ENCODE measurements at regions of chr14 and their contacts with region 1.

Region 1: GRCh38 chr14:81400852-81401251 is 728 bp upstream of the STON2 start:
- DNase-seq: peak; percentile 57
- H3K4me3 Mint-ChIP-seq: peak overlapping the region; percentile 0
- H3K27ac Mint-ChIP-seq: peak overlapping the region; percentile 48
- H3K4me1 Mint-ChIP-seq: peaks cover 29% of the 10 kb centered on the region
- H3K27me3 Mint-ChIP-seq: no peaks in the 10 kb centered on the region
- CTCF ChIP-seq: no peak

Region 2: GRCh38 chr14:81105378-81105777 is 295.5 kb before region 1 on chr14:
- CTCF ChIA-PET with region 1: no interaction called
- intact Hi-C with region 1: no loop called
- DNase-seq: no peak
- H3K4me3 Mint-ChIP-seq: no peak overlapping the region
- H3K27ac Mint-ChIP-seq: no peak overlapping the region
- H3K4me1 Mint-ChIP-seq: no peaks in the 10 kb centered on the region
- H3K27me3 Mint-ChIP-seq: peaks cover 13% of the 10 kb centered on the region
- CTCF ChIP-seq: no peak

Region 3: GRCh38 chr14:81324018-81324417 is 76.8 kb before region 1 on chr14:
- CTCF ChIA-PET with region 1: no interaction called
- intact Hi-C with region 1: loop called (anchors 2 kb)
- DNase-seq: peak; percentile 73
- H3K4me3 Mint-ChIP-seq: peak overlapping the region; percentile 73
- H3K27ac Mint-ChIP-seq: peak overlapping the region; percentile 66
- H3K4me1 Mint-ChIP-seq: peaks cover 48% of the 10 kb centered on the region
- H3K27me3 Mint-ChIP-seq: no peaks in the 10 kb centered on the region
- CTCF ChIP-seq: no peak

Region 4: GRCh38 chr14:81436296-81437138 is 35.7 kb after region 1 on chr14:
- CTCF ChIA-PET with region 1: interaction called, 9 read pairs
- intact Hi-C with region 1: loop called (anchors 2 kb)
- DNase-seq: peak; percentile 87
- H3K4me3 Mint-ChIP-seq: peak overlapping the region; percentile 84
- H3K27ac Mint-ChIP-seq: no peak overlapping the region
- H3K4me1 Mint-ChIP-seq: peaks cover 16% of the 10 kb centered on the region
- H3K27me3 Mint-ChIP-seq: peaks cover 46% of the 10 kb centered on the region
- CTCF ChIP-seq: no peak

Measured in Calu3 (cell line).